ENCODE measurements at regions of chr1 and their contacts with region 1.

Region 1: DNA sequence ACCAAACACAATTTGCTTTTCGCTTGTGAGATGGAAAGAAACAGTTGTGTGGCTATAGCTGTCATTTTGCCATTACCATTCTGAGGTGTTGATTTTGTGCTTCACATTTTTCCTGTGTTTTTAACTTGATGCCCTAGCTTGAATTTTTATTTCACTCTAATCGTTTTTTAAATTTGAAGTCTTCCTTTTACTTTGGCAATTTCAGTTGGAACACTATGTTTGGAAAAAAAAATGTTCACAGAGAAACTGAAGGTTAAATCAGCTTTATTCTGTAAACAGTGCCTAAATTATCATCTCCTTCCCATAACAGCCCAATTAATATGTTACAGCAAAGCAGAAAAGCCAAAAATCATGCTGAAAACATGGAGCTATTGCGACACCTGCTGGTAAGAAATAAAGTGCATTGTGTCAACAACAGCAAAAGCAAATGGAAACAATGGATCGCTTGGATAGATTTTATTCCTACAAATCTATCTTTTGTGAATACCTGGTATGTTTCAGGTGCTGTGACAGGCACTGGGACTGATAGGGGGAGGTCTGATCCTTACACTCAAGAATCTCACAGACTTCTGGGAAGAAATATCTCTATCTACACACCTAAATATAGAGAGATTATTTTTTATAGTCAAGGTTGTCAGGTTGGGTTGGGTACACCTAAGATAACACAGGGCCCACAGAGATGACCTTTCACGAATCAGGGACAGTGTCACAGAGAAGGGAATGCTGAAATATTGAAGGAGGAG is 16.2 kb upstream of the ERICH3 start:
- DNase-seq: peak; percentile 35 to 51
- H3K4me3 ChIP-seq: no peak overlapping the region; the same call in 1 of the 2 replicates
- H3K4me3 Mint-ChIP-seq: peak overlapping the region; percentile 29
- H3K27ac Mint-ChIP-seq: no peak overlapping the region
- H3K4me1 ChIP-seq: no peaks in the 10 kb centered on the region
- H3K4me1 Mint-ChIP-seq: peaks cover 6% of the 10 kb centered on the region
- H3K27me3 ChIP-seq: no peaks in the 10 kb centered on the region
- H3K27me3 Mint-ChIP-seq: peaks cover 2% of the 10 kb centered on the region
- CTCF ChIP-seq: peak; percentile 39 to 61

Region 2: DNA sequence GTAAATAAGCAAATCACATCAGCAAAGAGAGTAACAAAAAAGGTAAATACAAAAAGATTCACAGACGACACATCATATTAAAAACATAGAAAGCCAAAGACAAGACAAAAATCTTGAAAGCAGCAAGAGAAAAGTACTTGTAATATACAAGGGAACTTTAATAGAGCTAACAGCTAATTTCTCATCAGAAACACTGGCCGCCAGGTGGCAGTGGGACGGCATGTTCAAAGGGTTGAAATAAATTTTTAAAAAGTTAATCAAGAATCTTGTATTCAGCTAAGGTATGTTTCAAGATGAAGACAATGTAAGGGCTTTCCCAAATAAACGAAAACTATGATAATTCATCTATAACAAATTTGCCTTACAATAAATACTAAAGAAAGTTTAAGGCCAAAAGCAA is 849.9 kb before region 1 on chr1:
- CTCF ChIA-PET with region 1: no interaction called
- POLR2A ChIA-PET with region 1: no interaction called
- intact Hi-C with region 1: loop called (anchors 2 kb)
- DNase-seq: peak in 1 of 2 experiments; percentile 25
- H3K4me3 ChIP-seq: no peak overlapping the region
- H3K4me3 Mint-ChIP-seq: no peak overlapping the region
- H3K27ac Mint-ChIP-seq: no peak overlapping the region
- H3K4me1 ChIP-seq: no peaks in the 10 kb centered on the region
- H3K4me1 Mint-ChIP-seq: no peaks in the 10 kb centered on the region
- H3K27me3 ChIP-seq: no peaks in the 10 kb centered on the region
- H3K27me3 Mint-ChIP-seq: no peaks in the 10 kb centered on the region
- CTCF ChIP-seq: peak in 1 of 2 experiments; percentile 43

Region 3: GRCh38 chr1:74003806-74004205 is 686.0 kb before region 1 on chr1:
- CTCF ChIA-PET with region 1: no interaction called
- POLR2A ChIA-PET with region 1: no interaction called
- intact Hi-C with region 1: loop called (anchors 5 kb)
- DNase-seq: no peak
- H3K4me3 ChIP-seq: no peak overlapping the region
- H3K4me3 Mint-ChIP-seq: no peak overlapping the region
- H3K27ac Mint-ChIP-seq: no peak overlapping the region
- H3K4me1 ChIP-seq: no peaks in the 10 kb centered on the region
- H3K4me1 Mint-ChIP-seq: no peaks in the 10 kb centered on the region
- H3K27me3 ChIP-seq: no peaks in the 10 kb centered on the region
- H3K27me3 Mint-ChIP-seq: no peaks in the 10 kb centered on the region
- CTCF ChIP-seq: no peak

Region 4: DNA sequence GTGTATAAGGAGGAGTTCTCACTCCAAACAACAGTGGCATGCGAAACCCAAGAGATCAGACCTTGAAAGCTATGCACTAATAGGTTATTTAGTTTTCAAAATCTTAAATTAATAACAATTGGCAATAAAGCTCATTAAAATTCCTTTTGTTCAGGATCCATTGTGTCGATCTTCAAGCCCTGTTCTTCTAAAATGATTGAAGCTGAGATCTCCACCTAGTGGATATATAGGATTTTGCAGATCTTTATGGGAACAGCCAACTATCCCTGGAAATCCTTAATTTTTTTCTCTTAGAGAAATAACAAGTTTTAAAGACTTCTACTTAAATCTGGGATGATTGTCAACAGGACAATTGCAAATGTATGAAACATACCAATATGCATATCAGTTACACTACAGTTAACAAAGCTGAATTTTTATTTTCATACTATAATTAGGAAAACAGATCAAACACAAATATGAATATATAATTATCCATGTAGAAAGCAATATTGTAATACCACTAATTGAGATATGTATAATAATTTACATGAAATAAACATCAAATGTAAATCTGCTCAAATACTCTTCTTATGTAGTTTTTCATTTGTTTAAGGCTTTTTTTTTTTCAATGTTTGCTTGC is 220.7 kb before region 1 on chr1:
- CTCF ChIA-PET with region 1: no interaction called
- POLR2A ChIA-PET with region 1: no interaction called
- intact Hi-C with region 1: loop called (anchors 5 kb)
- DNase-seq: peak in 1 of 2 experiments; percentile 3
- H3K4me3 ChIP-seq: no peak overlapping the region
- H3K4me3 Mint-ChIP-seq: no peak overlapping the region
- H3K27ac Mint-ChIP-seq: no peak overlapping the region
- H3K4me1 ChIP-seq: no peaks in the 10 kb centered on the region
- H3K4me1 Mint-ChIP-seq: no peaks in the 10 kb centered on the region
- H3K27me3 ChIP-seq: no peaks in the 10 kb centered on the region
- H3K27me3 Mint-ChIP-seq: no peaks in the 10 kb centered on the region
- CTCF ChIP-seq: peak in 1 of 2 experiments; percentile 38

Region 5: GRCh38 chr1:74504125-74504932 is 185.5 kb before region 1 on chr1:
- CTCF ChIA-PET with region 1: interaction called, 3 read pairs
- POLR2A ChIA-PET with region 1: no interaction called
- intact Hi-C with region 1: loop called (anchors 10 kb)
- DNase-seq: peak; percentile 44 to 59
- H3K4me3 ChIP-seq: no peak overlapping the region
- H3K4me3 Mint-ChIP-seq: no peak overlapping the region
- H3K27ac Mint-ChIP-seq: no peak overlapping the region
- H3K4me1 ChIP-seq: no peaks in the 10 kb centered on the region
- H3K4me1 Mint-ChIP-seq: no peaks in the 10 kb centered on the region
- H3K27me3 ChIP-seq: no peaks in the 10 kb centered on the region
- H3K27me3 Mint-ChIP-seq: peaks cover 9% of the 10 kb centered on the region
- CTCF ChIP-seq: peak; percentile 55 to 65

Region 6: GRCh38 chr1:74596717-74597116 is 93.1 kb before region 1 on chr1:
- CTCF ChIA-PET with region 1: no interaction called
- POLR2A ChIA-PET with region 1: no interaction called
- intact Hi-C with region 1: no loop called
- DNase-seq: no peak
- H3K4me3 ChIP-seq: no peak overlapping the region
- H3K4me3 Mint-ChIP-seq: no peak overlapping the region
- H3K27ac Mint-ChIP-seq: no peak overlapping the region
- H3K4me1 ChIP-seq: no peaks in the 10 kb centered on the region
- H3K4me1 Mint-ChIP-seq: no peaks in the 10 kb centered on the region
- H3K27me3 ChIP-seq: no peaks in the 10 kb centered on the region
- H3K27me3 Mint-ChIP-seq: peaks cover 2% of the 10 kb centered on the region
- CTCF ChIP-seq: no peak

Region 7: GRCh38 chr1:74703386-74704182 is 13.8 kb after region 1 on chr1:
- CTCF ChIA-PET with region 1: no interaction called
- POLR2A ChIA-PET with region 1: no interaction called
- intact Hi-C with region 1: no loop called
- DNase-seq: no peak
- H3K4me3 ChIP-seq: no peak overlapping the region
- H3K4me3 Mint-ChIP-seq: no peak overlapping the region
- H3K27ac Mint-ChIP-seq: no peak overlapping the region
- H3K4me1 ChIP-seq: no peaks in the 10 kb centered on the region
- H3K4me1 Mint-ChIP-seq: no peaks in the 10 kb centered on the region
- H3K27me3 ChIP-seq: no peaks in the 10 kb centered on the region
- H3K27me3 Mint-ChIP-seq: no peaks in the 10 kb centered on the region
- CTCF ChIP-seq: no peak

Region 8: GRCh38 chr1:74733604-74734484 is 44.1 kb after region 1 on chr1:
- CTCF ChIA-PET with region 1: interaction called, 7 read pairs
- POLR2A ChIA-PET with region 1: no interaction called
- intact Hi-C with region 1: loop called (anchors 2 kb)
- DNase-seq: peak in 1 of 2 experiments; percentile 57
- H3K4me3 ChIP-seq: peak overlapping the region; percentile 63
- H3K4me3 Mint-ChIP-seq: peak overlapping the region; percentile 83
- H3K27ac Mint-ChIP-seq: peak overlapping the region; percentile 94
- H3K4me1 ChIP-seq: peaks cover 15% of the 10 kb centered on the region; the same call in 1 of the 2 replicates
- H3K4me1 Mint-ChIP-seq: no peaks in the 10 kb centered on the region
- H3K27me3 ChIP-seq: no peaks in the 10 kb centered on the region
- H3K27me3 Mint-ChIP-seq: no peaks in the 10 kb centered on the region
- CTCF ChIP-seq: peak; percentile 51 to 57

Region 9: GRCh38 chr1:74753104-74753503 is 63.3 kb after region 1 on chr1:
- CTCF ChIA-PET with region 1: no interaction called
- POLR2A ChIA-PET with region 1: no interaction called
- intact Hi-C with region 1: no loop called
- DNase-seq: no peak
- H3K4me3 ChIP-seq: no peak overlapping the region
- H3K4me3 Mint-ChIP-seq: no peak overlapping the region
- H3K27ac Mint-ChIP-seq: no peak overlapping the region
- H3K4me1 ChIP-seq: no peaks in the 10 kb centered on the region
- H3K4me1 Mint-ChIP-seq: no peaks in the 10 kb centered on the region
- H3K27me3 ChIP-seq: no peaks in the 10 kb centered on the region
- H3K27me3 Mint-ChIP-seq: no peaks in the 10 kb centered on the region
- CTCF ChIP-seq: no peak

Measured in Caco-2 (cell line).